PC-3 (cell line): ENCODE measurements at regions of chr12 and their contacts with region 1.

Region 1: DNA sequence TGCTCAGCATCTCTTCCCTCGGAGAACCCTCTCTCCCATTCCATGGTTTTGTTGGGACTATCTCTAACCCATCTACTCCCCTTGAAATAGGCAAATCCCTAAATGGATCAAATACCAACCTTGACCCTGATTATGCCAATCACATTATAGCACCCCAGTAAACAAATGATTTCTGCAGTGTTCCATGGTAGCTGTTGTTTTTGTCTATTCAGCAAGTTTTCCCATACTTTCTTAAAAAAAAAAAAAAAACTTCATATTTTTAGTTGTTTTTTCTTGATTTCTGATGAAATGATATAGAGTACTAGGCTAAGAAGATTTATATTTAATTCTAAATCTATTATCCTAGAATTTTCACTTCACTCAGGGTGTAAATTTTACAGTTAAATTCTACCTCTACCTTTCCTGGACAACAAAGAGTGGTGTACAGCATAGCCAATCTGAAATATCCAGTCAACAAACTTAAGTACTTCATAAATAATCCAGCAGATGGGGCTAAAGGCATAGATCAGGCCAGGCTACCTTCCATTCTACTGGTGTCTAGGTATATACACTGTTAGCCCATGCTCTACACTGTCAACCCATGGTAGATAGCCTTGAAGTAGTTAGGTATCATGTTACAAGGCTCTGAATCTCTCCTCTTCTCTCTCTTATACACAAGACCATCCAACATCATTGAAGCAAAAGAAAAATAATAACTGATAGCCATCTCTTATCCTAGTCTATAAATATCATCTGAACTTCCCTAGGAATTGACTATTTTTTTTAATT is 82.2 kb downstream of the PLEKHG7 start:
- DNase-seq: peak; percentile 90
- ATAC-seq: peak; percentile 99
- H3K4me3 ChIP-seq: no peak overlapping the region
- H3K27ac ChIP-seq: no peak overlapping the region
- H3K4me1 ChIP-seq: no peaks in the 10 kb centered on the region
- H3K27me3 ChIP-seq: no peaks in the 10 kb centered on the region
- CTCF ChIP-seq: peak; percentile 78

Region 2: DNA sequence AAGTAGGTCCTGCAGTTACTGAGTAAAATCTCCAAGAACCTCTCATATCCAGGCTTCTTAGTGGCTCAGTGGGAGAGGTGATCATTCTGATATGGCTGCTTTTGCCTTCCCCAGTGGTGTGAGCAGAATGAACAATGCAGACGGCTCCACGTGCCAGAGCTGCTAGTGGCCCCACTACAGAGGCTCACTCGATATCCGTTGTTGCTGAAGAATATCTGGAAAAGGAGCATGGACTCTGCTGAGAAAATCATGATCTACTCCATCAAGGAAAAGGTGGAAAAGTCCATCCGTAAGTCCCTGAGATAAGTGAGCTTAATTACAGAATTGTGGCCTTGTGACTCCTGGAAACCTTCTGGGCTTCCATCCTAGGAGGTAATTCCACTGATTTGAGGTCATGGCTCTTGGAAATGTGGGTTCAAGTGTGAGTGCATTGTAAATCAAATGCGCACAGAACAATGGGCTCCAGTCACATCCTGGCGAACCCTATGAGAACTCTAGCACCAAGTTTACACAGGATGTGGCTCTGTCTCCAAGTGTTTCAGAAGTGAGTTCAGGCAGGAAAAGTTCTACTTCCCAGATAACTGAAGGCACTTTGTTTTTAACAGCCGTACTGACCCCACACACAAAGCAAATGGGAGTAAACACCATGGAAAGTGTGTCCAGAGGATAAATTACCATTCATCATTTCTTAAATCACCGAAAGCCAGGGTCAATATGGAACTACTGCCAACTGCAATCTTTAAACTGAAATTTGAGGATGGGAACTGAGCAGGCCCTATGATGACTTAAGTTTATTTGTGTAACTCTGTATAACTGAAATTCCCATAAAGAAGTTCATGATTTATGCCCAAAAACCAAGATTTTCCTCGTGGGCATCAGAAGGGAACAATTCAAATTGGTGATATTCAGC is 30.7 kb before region 1 on chr12:
- CTCF ChIA-PET with region 1: no interaction called
- POLR2A ChIA-PET with region 1: no interaction called
- intact Hi-C with region 1: no loop called
- DNase-seq: peak; percentile 8
- ATAC-seq: peak; percentile 67
- H3K4me3 ChIP-seq: no peak overlapping the region
- H3K27ac ChIP-seq: peak overlapping the region; percentile 65
- H3K4me1 ChIP-seq: no peaks in the 10 kb centered on the region
- H3K27me3 ChIP-seq: no peaks in the 10 kb centered on the region
- CTCF ChIP-seq: no peak

Region 3: DNA sequence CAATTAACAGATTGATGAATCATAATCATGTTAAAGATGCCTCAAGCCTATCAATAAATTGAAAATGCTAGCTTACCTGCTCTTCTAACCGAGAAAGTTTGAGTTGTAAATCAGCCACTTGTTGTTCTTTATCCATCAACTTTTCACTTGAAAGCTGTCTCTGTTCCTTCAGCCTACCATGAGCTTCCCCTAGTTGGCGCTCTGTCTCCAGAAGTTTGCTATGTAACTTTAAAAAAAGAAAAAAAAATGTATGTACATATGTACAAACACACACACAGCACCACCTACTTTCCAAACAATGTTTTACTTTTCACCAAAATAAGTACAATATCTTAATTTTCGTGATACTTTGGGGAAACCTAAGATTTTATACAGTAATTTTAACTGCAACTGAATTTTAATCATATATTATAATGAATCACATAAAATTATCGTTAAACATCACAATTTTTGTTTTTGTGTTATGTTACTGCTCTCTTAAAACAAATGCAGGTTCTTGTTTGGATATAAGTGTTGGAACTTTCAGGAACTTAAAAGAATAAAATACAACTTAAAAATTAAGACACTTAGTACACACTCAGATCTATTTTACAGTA is 43.0 kb after region 1 on chr12:
- CTCF ChIA-PET with region 1: no interaction called
- POLR2A ChIA-PET with region 1: no interaction called
- intact Hi-C with region 1: loop called (anchors 5 kb)
- DNase-seq: peak; percentile 72
- ATAC-seq: peak; percentile 53
- H3K4me3 ChIP-seq: no peak overlapping the region
- H3K27ac ChIP-seq: no peak overlapping the region
- H3K4me1 ChIP-seq: no peaks in the 10 kb centered on the region
- H3K27me3 ChIP-seq: no peaks in the 10 kb centered on the region
- CTCF ChIP-seq: peak; percentile 96

Region 4: GRCh38 chr12:92943482-92944250 is 158.7 kb after region 1 on chr12:
- CTCF ChIA-PET with region 1: interaction called, 10 read pairs
- POLR2A ChIA-PET with region 1: no interaction called
- intact Hi-C with region 1: no loop called
- DNase-seq: no peak
- ATAC-seq: peak; percentile 42; the same call in 1 of the 2 replicates
- H3K4me3 ChIP-seq: no peak overlapping the region
- H3K27ac ChIP-seq: no peak overlapping the region
- H3K4me1 ChIP-seq: 0 out of 2 replicates have a peak, but pooled peaks cover 4% of the 10 kb centered on the region
- H3K27me3 ChIP-seq: no peaks in the 10 kb centered on the region
- CTCF ChIP-seq: peak; percentile 32; the same call in 1 of the 2 replicates

Region 5: GRCh38 chr12:93137656-93138612 is 353.0 kb after region 1 on chr12:
- CTCF ChIA-PET with region 1: interaction called, 3 read pairs
- POLR2A ChIA-PET with region 1: no interaction called
- intact Hi-C with region 1: loop called (anchors 10 kb)
- DNase-seq: peak; percentile 96
- ATAC-seq: peak; percentile 66
- H3K4me3 ChIP-seq: peak overlapping the region; percentile 1; the same call in 1 of the 2 replicates
- H3K27ac ChIP-seq: peak overlapping the region; percentile 77
- H3K4me1 ChIP-seq: peaks cover 53% of the 10 kb centered on the region
- H3K27me3 ChIP-seq: no peaks in the 10 kb centered on the region
- CTCF ChIP-seq: no peak

Region 6: GRCh38 chr12:93419388-93420034 is 634.5 kb after region 1 on chr12:
- CTCF ChIA-PET with region 1: no interaction called
- POLR2A ChIA-PET with region 1: no interaction called
- intact Hi-C with region 1: loop called (anchors 1 kb)
- DNase-seq: peak; percentile 68
- ATAC-seq: peak; percentile 74
- H3K4me3 ChIP-seq: no peak overlapping the region
- H3K27ac ChIP-seq: no peak overlapping the region
- H3K4me1 ChIP-seq: no peaks in the 10 kb centered on the region
- H3K27me3 ChIP-seq: no peaks in the 10 kb centered on the region
- CTCF ChIP-seq: peak; percentile 69